CD4-positive, alpha-beta T cell (primary cell): ENCODE measurements at regions of chr22 and their contacts with region 1.

Region 1: DNA sequence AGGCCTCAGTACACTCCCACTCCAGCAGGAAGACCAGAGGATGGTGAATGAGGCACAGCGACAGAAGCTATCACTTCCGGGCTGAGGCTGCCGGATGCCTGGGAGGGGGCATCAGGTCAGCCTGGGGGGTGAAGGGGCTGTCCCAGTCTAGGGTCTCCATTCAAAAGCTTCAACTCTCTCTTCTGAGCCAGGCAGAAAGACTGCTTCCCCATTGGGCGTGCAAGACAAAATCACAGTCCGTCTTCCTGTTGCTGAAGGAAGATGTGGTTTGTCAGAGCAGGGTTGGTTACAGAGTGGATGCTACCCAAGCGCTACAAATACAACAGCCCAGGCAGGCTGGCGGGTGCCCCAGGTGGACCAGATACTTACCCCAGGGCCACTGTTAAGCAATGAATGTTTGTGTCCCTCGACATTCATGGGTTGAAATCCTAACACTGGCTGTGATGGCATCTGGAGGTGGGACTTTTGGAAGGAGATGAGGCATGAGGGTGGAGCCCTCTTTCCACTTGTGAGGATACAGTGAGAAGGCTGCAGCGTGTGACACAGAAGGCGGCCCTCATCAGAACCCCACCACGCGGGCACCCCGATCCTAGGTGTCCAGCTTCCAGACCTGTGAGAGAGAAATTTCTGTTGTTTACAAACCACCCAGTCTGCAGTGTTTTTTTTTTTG is 12.0 kb downstream of the UPK3A start:
- DNase-seq: peak; percentile 32 to 77 (median 40)
- ATAC-seq: peak; percentile 96
- H3K4me3 ChIP-seq: peak overlapping the region; percentile 25
- H3K4me3 Mint-ChIP-seq: peak overlapping the region; percentile 45
- H3K27ac ChIP-seq: peak overlapping the region; percentile 51 to 75
- H3K27ac Mint-ChIP-seq: peak overlapping the region; percentile 86
- H3K4me1 ChIP-seq: peaks cover 34% of the 10 kb centered on the region
- H3K4me1 Mint-ChIP-seq: peaks cover 27% of the 10 kb centered on the region
- H3K27me3 ChIP-seq: no peaks in the 10 kb centered on the region
- H3K27me3 Mint-ChIP-seq: no peaks in the 10 kb centered on the region
- CTCF ChIP-seq: no peak

Region 2: DNA sequence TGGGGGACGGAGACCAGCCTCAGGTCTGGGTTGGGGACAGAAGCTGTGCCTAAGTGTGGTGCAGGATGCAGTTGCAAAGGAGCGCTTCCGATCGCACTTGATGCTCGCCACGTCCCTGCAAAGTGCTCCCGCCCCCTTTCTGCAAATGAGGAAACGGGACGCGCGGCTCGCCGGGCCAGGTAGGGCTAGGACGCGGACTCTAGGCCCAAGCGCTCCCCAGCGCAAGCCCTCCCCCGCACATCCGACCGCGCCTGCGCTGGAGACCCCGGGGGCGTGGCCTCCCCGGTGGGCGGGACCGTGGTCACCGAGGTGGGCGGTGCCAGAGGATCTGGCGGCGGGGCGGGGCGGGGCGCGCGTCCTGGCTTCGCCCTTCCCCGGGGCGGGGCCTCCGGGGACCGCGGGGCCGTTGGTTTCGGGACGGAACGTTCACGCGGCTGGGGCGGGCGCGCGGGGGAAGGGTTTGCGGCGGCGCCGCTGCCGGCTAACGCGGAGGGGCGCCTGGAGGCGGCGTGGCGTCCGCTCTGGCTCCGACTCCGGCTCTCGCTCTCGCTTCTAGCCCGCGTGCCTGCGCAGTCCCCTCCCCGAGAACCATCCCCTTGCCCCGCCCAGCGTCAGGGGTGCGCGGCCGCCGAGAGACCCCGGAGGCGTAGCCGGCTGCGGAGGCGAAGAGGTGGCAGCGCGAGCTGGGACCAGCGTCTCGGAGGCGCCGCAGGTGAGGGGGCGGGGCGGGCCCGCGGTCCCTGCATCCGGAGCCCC is 12.9 kb after region 1 on chr22 and contains the start of gene FAM118A:
- CTCF ChIA-PET with region 1: no interaction called
- POLR2A ChIA-PET with region 1: interaction called, 13 read pairs
- intact Hi-C with region 1: no loop called
- DNase-seq: peak; percentile 91 to 99 (median 96)
- ATAC-seq: peak; percentile 84
- H3K4me3 ChIP-seq: peak within 1 kb of the TSS; percentile 93
- H3K4me3 Mint-ChIP-seq: peak within 1 kb of the TSS; percentile 85
- H3K27ac ChIP-seq: peak within 1 kb of the TSS; percentile 77 to 87
- H3K27ac Mint-ChIP-seq: peak within 1 kb of the TSS; percentile 95
- H3K4me1 ChIP-seq: peaks cover 55% of the 10 kb centered on the region
- H3K4me1 Mint-ChIP-seq: peaks cover 49% of the 10 kb centered on the region
- H3K27me3 ChIP-seq: no peaks in the 10 kb centered on the region
- H3K27me3 Mint-ChIP-seq: no peaks in the 10 kb centered on the region
- CTCF ChIP-seq: no peak
- total RNA-seq, gene FAM118A: 159 to 161 TPM